Activated CD4-positive, alpha-beta T cell treated with anti-CD3 and anti-CD28 coated beads for 36 hours (primary cell): ENCODE measurements at regions of chr19 and their contacts with region 1.

Region 1: GRCh38 chr19:37466798-37467607 is at the start of gene ZNF569:
- DNase-seq: peak; percentile 93
- ATAC-seq: peak; percentile 71
- H3K4me3 Mint-ChIP-seq: peak within 1 kb of the TSS; percentile 94
- H3K27ac Mint-ChIP-seq: peak within 1 kb of the TSS; percentile 95
- H3K4me1 Mint-ChIP-seq: peaks cover 31% of the 10 kb centered on the region
- H3K27me3 Mint-ChIP-seq: no peaks in the 10 kb centered on the region
- total RNA-seq, gene ZNF569: 7.4 to 9.1 TPM

Region 2: DNA sequence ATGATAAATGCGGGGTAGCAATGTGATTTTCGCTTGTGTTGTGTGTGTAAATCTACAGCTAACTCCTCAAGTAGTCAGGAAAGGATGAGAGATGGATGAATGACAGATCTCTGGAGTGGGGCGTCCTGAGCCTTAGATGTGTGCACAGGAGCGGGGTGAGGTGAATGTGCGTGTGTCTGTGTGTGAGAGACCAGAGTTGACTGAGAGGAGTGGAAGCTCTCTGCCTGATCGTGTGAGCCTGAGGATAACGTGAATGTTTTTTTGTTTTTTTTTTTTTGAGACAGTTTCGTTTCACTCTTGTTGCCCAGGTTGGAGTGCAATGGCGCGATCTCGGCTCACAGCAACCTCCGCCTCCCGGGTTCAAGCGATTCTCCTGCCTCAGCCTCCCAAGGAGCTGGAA is 801.2 kb before region 1 on chr19:
- CTCF ChIA-PET with region 1: no interaction called
- POLR2A ChIA-PET with region 1: no interaction called
- intact Hi-C with region 1: loop called in 1 of 2 experiments (anchors 2 kb)
- DNase-seq: no peak
- ATAC-seq: no peak
- H3K4me3 Mint-ChIP-seq: peak overlapping the region; percentile 98
- H3K27ac Mint-ChIP-seq: peak overlapping the region; percentile 99
- H3K4me1 Mint-ChIP-seq: peaks cover 26% of the 10 kb centered on the region
- H3K27me3 Mint-ChIP-seq: no peaks in the 10 kb centered on the region

Region 3: DNA sequence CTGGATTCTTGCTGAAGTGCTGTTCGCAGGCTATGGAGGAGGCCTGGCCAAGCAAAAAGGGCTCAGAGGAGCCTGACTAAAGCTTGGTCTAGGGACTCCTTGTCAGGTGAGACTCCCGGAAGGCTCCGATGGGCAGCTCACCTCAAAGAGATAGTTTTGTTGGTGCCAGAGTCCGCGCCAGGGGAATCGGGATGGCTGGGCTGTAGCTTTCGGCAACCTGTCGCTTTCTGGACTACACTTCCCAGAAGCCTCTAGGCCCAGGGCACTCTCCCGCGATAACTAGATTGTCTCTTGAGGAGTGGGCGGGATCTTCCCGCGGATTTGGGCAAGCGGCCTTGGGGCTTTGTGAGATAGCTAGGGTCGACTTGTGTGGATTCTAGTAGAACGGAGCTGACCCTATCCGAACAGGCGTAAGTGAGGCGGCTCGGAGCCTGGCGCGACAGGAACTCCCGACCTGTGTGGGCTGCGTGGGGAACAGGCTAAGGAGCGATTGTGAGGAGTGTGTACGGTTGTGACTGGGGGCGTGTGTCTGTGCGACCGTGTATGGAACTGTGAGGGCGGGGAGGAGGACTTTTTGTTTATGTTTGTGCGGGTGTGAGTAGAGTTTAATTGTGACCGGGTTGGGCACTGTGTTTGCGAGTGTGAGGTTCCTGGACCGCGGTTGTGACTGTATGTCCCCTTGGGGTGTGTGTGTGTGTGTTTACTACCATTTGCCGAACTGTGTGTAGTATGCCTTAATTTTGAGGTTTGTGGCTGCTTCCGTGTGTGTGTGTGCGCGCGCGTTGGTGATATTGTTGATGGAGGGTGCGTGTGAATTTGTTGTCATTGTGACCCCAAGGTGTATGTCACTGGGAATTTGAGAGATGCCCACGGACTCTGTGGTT is 616.2 kb before region 1 on chr19 and contains the start of gene ZNF345:
- CTCF ChIA-PET with region 1: no interaction called
- POLR2A ChIA-PET with region 1: no interaction called
- intact Hi-C with region 1: loop called in 1 of 2 experiments (anchors 1 kb)
- DNase-seq: peak; percentile 91
- ATAC-seq: peak; percentile 82
- H3K4me3 Mint-ChIP-seq: no peak within 1 kb of the TSS
- H3K27ac Mint-ChIP-seq: no peak within 1 kb of the TSS
- H3K4me1 Mint-ChIP-seq: peaks cover 10% of the 10 kb centered on the region
- H3K27me3 Mint-ChIP-seq: no peaks in the 10 kb centered on the region
- total RNA-seq, gene ZNF345: 3.5 to 4.6 TPM

Region 4: DNA sequence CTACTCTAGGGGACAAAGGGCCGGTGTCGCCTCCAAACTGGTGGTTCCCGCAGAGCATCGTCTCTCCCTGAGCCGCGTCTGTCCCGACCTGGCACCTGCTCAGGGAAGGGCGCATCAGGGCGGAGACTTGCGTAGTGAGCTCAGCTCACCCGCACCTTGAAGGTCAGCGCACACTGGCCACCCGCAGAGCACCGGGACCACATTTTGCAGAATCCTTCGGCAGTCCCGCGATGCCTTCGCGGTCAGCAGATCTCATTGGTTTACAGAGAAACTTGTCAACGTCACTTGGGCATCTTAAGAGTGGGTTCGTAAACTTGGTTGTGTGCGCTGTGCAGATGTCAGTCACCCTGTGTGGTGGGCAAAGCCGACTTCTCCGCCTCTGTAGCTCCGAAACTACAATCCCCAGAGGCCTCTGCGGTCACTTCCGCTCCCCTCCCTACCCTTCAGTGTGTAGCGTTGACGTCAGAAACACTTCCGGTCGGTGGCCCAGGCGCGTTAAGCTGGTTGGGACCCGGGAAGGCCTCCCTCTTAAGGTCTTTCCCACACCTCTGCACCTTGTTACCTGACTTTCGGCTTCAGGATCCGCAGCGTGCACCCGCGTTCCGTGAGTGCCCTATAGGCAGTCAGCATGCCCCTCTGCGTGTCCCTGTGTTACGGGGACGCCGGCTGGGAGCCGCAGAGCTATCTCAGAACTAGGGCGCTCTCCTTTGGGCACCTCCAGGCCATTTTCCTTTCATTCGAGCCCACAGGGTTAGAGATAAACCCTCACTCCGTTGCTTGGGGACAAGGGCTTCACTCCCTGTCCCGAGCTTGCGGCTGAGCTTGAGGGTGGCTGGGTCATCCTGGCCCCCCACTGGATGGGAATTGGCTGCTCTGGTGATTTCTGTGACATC is 132.6 kb before region 1 on chr19:
- CTCF ChIA-PET with region 1: no interaction called
- POLR2A ChIA-PET with region 1: interaction called, 4 read pairs
- intact Hi-C with region 1: loop called in 1 of 2 experiments (anchors 1 kb)
- DNase-seq: peak; percentile 93
- ATAC-seq: peak; percentile 99
- H3K4me3 Mint-ChIP-seq: peak overlapping the region; percentile 79
- H3K27ac Mint-ChIP-seq: peak overlapping the region; percentile 70
- H3K4me1 Mint-ChIP-seq: peaks cover 34% of the 10 kb centered on the region
- H3K27me3 Mint-ChIP-seq: no peaks in the 10 kb centered on the region

Region 5: DNA sequence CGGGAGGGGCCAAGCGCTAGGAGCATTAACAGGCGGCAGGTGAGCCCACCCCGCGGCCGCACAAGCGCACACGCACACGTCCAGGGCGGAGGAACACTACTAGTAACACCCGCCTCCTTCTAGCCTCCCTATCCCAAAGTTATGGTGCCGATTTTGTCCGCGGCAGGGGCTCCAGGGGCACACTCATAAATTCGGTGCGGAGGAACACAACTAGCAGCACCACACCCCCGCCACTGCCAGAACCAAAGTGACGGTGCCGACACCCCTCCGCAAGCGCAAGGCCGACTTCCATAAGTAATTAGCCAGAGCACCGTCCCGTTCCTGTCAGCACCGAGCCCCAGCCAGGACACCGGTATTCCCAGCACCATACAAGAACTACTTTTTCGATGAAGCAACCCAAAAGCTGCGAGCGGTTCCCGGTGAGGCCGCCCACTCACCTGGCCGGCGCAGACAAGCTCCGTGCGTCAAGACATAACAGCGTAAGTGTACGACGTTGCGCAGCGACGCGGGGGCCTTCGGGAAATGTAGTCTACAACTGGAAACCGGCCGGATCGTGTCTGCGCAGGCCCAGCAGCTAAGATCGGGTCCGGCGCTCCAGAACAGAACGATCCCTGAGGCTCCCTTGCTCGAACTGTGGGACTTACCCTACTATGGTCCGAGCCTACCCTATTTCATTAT is 127.4 kb after region 1 on chr19 and contains the starts of genes ZNF540 and ZNF571:
- CTCF ChIA-PET with region 1: no interaction called
- POLR2A ChIA-PET with region 1: interaction called, 6 read pairs
- intact Hi-C with region 1: loop called (anchors 1 kb)
- DNase-seq: peak; percentile 97
- ATAC-seq: peak; percentile 97
- H3K4me3 Mint-ChIP-seq: peak within 1 kb of the TSS; percentile 94
- H3K27ac Mint-ChIP-seq: peak within 1 kb of the TSS; percentile 99
- H3K4me1 Mint-ChIP-seq: peaks cover 27% of the 10 kb centered on the region
- H3K27me3 Mint-ChIP-seq: no peaks in the 10 kb centered on the region
- total RNA-seq, gene ZNF540: 0.67 to 1.1 TPM
- total RNA-seq, gene ZNF571: 2.4 to 2.9 TPM

Region 6: DNA sequence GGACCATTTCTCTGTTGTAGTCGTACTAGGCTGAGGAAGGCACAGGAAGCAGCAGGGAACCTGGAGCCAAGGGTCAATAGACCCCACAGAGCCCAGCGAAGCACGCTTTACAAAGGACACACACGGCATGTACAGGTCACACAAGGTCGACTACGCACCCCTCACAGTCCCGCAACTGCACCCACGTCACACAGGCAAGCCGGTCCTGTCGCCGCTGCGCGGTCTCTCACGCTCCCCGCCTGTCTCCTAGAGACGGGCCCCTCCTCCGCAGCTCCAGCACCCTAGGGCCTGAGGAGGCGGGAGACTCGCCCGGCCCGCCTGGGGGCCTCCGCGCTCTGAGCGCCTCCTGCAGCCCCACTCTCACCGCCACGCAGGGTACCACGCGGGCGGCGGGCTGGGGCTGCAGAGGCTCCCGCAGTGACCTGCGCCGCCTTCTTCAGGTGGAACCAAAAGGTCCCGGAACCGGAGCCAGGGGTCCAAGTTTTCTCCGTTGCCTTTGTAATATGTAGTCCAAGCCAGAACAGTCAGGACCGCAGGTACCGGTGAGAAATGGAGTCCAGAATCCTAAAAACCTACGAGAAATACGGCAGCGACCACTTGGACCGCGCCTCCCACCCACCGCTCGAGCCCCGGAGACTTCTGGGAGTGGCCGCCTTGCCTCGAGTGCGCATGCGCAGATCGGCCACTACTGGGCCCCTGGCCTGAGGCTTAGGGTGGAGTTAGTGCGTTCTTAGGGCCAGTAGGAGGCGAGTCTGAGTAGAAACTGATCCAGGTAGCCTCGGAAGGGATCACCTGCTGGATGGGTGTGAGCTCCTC is 252.3 kb after region 1 on chr19 and contains the start of gene ZNF607:
- CTCF ChIA-PET with region 1: no interaction called
- POLR2A ChIA-PET with region 1: no interaction called
- intact Hi-C with region 1: loop called in 1 of 2 experiments (anchors 1 kb)
- DNase-seq: peak; percentile 94
- ATAC-seq: peak; percentile 96
- H3K4me3 Mint-ChIP-seq: peak within 1 kb of the TSS; percentile 88
- H3K27ac Mint-ChIP-seq: peak within 1 kb of the TSS; percentile 89
- H3K4me1 Mint-ChIP-seq: peaks cover 19% of the 10 kb centered on the region
- H3K27me3 Mint-ChIP-seq: no peaks in the 10 kb centered on the region
- total RNA-seq, gene ZNF607: 4.9 to 8.3 TPM

Region 7: DNA sequence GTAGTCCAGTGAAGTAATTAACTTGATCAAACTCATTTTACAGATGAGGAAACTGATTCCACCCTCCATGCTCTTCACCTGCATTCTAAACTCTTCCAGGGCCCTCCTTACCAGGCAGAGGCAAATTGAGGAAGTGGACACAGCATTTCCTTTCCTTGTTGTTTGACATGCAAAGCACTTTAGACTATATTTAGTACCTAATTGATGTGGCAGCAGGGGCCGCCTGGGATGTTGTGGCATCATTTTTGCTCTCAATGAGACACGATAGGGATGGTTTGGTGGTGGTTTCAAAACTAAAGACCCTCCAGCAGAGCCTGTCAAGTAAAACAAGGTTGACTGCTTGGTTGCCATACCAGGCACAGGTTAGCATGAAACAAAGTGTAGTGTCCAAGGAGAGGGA is 447.9 kb after region 1 on chr19:
- CTCF ChIA-PET with region 1: no interaction called
- POLR2A ChIA-PET with region 1: no interaction called
- intact Hi-C with region 1: no loop called
- DNase-seq: no peak
- ATAC-seq: no peak
- H3K4me3 Mint-ChIP-seq: no peak overlapping the region
- H3K27ac Mint-ChIP-seq: no peak overlapping the region
- H3K4me1 Mint-ChIP-seq: peaks cover 8% of the 10 kb centered on the region
- H3K27me3 Mint-ChIP-seq: no peaks in the 10 kb centered on the region